Testis (tissue), 5 donors: ENCODE measurements at regions of chr13 and their contacts with region 1.

Region 1: GRCh38 chr13:85806553-85807175 is 7.4 kb upstream of the SLITRK6 start:
- DNase-seq: no peak
- H3K4me3 ChIP-seq: no peak overlapping the region
- H3K27ac ChIP-seq: no peak overlapping the region
- H3K4me1 ChIP-seq: no peaks in the 10 kb centered on the region
- H3K27me3 ChIP-seq: no peaks in the 10 kb centered on the region
- CTCF ChIP-seq: peak; percentile 41 to 64 (median 46)
- POLR2A ChIP-seq: no peak

Region 2: DNA sequence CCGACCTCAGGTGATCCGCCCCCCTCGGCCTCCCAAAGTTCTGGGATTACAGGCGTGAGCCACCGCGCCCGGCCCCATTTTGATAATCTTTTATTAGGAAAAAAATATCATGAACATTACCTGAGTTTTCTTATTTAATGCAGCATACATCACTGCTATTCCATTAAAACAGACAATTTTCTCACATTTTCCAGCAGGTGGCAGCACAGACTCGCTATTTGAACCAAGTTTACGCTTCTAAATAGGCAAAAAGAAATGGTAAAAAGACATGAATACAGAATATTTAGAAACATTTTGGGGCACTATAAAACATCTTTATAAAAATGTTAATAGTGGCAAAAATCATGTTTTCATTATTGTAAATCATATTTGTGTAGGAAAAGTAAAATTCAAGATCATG is 910.5 kb before region 1 on chr13:
- intact Hi-C with region 1: loop called (anchors 5 kb)
- DNase-seq: peak; percentile 25
- H3K4me3 ChIP-seq: no peak overlapping the region
- H3K27ac ChIP-seq: no peak overlapping the region
- H3K4me1 ChIP-seq: no peaks in the 10 kb centered on the region
- H3K27me3 ChIP-seq: no peaks in the 10 kb centered on the region
- CTCF ChIP-seq: peak; percentile 49 to 63 (median 56)
- POLR2A ChIP-seq: no peak